B cell (primary cell): ENCODE measurements at regions of chr19 and their contacts with region 1.

Region 1: GRCh38 chr19:50414864-50415660 is 3.7 kb upstream of the SPIB start:
- DNase-seq: peak; percentile 91
- ATAC-seq: peak; percentile 21
- H3K4me3 ChIP-seq: peak overlapping the region in 4 of 5 experiments; percentile 44 to 60 (median 52)
- H3K4me3 Mint-ChIP-seq: peak overlapping the region; percentile 81
- H3K27ac ChIP-seq: peak overlapping the region; percentile 97 to 98
- H3K27ac Mint-ChIP-seq: peak overlapping the region; percentile 98
- H3K4me1 ChIP-seq: peaks cover 30 to 48% of the 10 kb centered on the region in 2 donors
- H3K4me1 Mint-ChIP-seq: peaks cover 37% of the 10 kb centered on the region
- H3K27me3 ChIP-seq: no peaks in the 10 kb centered on the region
- H3K27me3 Mint-ChIP-seq: no peaks in the 10 kb centered on the region
- CTCF ChIP-seq: peak; percentile 92

Region 2: DNA sequence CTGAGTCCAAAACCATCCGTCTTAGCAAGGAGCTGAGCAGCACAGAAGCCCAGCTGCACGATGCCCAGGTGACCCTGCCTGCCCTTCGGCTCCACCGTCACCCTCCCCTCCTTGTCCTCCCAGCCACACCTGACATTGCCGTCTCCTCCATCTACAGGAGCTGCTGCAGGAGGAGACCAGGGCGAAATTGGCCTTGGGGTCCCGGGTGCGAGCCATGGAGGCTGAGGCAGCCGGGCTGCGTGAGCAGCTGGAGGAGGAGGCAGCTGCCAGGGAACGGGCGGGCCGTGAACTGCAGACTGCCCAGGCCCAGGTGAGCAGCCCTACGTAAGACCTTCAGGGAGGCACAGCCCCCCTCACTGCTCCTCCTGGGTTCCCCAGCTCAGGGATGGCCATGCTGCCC is 135.0 kb before region 1 on chr19:
- CTCF ChIA-PET with region 1: no interaction called
- POLR2A ChIA-PET with region 1: no interaction called
- intact Hi-C with region 1: no loop called
- DNase-seq: no peak
- ATAC-seq: no peak
- H3K4me3 ChIP-seq: no peak overlapping the region
- H3K4me3 Mint-ChIP-seq: no peak overlapping the region
- H3K27ac ChIP-seq: no peak overlapping the region
- H3K27ac Mint-ChIP-seq: no peak overlapping the region
- H3K4me1 ChIP-seq: no peaks in the 10 kb centered on the region
- H3K4me1 Mint-ChIP-seq: no peaks in the 10 kb centered on the region
- H3K27me3 ChIP-seq: peaks cover 0 to 9% (median 0%) of the 10 kb centered on the region in 4 experiments
- H3K27me3 Mint-ChIP-seq: peaks cover 11% of the 10 kb centered on the region
- CTCF ChIP-seq: no peak

Region 3: GRCh38 chr19:50341091-50341564 is 73.9 kb before region 1 on chr19:
- CTCF ChIA-PET with region 1: interaction called, 4 read pairs
- POLR2A ChIA-PET with region 1: interaction called, 5 read pairs
- intact Hi-C with region 1: loop called (anchors 5 kb)
- DNase-seq: peak; percentile 81
- ATAC-seq: peak; percentile 56
- H3K4me3 ChIP-seq: peak overlapping the region in 4 of 5 experiments; percentile 61 to 91 (median 76)
- H3K4me3 Mint-ChIP-seq: peak overlapping the region; percentile 86
- H3K27ac ChIP-seq: peak overlapping the region; percentile 37 to 72
- H3K27ac Mint-ChIP-seq: peak overlapping the region; percentile 91
- H3K4me1 ChIP-seq: peaks cover 65 to 84% of the 10 kb centered on the region in 2 donors
- H3K4me1 Mint-ChIP-seq: peaks cover 77% of the 10 kb centered on the region
- H3K27me3 ChIP-seq: no peaks in the 10 kb centered on the region
- H3K27me3 Mint-ChIP-seq: no peaks in the 10 kb centered on the region
- CTCF ChIP-seq: no peak

Region 4: DNA sequence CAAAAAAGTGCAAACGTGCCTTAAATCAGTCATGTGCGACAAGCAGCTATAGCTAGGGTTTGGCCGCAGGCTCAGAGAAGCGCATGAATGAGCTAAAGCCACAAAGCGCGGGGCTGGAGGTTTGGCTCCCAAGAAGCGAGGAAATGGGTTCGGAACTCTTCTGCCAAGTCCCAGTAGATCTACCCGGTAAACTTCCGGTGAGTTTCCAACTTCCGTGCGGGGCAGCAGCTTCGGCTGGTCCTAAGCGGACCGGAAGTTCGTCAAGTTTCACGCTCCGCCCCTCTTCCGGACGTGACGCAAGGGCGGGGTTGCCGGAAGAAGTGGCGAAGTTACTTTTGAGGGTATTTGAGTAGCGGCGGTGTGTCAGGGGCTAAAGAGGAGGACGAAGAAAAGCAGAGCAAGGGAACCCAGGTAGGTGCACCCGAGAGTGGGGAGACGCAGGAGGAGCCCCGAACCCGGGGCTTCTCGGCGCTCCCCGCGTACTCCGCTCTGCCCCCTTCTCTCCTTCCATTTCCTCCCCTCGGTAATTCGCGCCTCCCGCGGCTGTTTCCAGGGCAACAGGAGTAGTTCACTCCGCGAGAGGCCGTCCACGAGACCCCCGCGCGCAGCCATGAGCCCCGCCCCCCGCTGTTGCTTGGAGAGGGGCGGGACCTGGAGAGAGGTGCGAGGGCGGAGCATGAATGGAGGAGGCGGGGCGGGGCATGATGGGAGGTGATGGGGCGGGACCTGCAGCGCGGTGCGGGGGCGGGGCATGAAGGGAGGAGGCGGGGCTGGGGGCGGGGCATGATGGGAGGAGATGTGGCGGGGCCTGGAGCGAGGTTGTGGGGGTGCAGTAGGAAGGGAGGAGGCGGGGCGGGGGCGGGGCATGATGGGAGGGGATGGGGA is 38.7 kb before region 1 on chr19 and contains the start of gene NR1H2:
- CTCF ChIA-PET with region 1: interaction called, 10 read pairs
- POLR2A ChIA-PET with region 1: interaction called, 16 read pairs
- intact Hi-C with region 1: loop called (anchors 2 kb)
- DNase-seq: peak; percentile 99
- ATAC-seq: peak; percentile 87
- H3K4me3 ChIP-seq: peak within 1 kb of the TSS; percentile 30 to 98 (median 91)
- H3K4me3 Mint-ChIP-seq: peak within 1 kb of the TSS; percentile 97
- H3K27ac ChIP-seq: peak within 1 kb of the TSS; percentile 99 to 100
- H3K27ac Mint-ChIP-seq: peak within 1 kb of the TSS; percentile 99
- H3K4me1 ChIP-seq: peaks cover 6 to 14% of the 10 kb centered on the region in 2 donors
- H3K4me1 Mint-ChIP-seq: peaks cover 19% of the 10 kb centered on the region
- H3K27me3 ChIP-seq: no peaks in the 10 kb centered on the region
- H3K27me3 Mint-ChIP-seq: no peaks in the 10 kb centered on the region
- CTCF ChIP-seq: no peak
- total RNA-seq, gene NR1H2: 116 and 118 TPM in 2 replicates

Region 5: GRCh38 chr19:50383852-50384684 is 31.0 kb before region 1 on chr19 and contains the start of gene POLD1:
- CTCF ChIA-PET with region 1: interaction called, 22 read pairs
- POLR2A ChIA-PET with region 1: interaction called, 15 read pairs
- intact Hi-C with region 1: loop called (anchors 1 kb)
- DNase-seq: peak; percentile 100
- ATAC-seq: peak; percentile 96
- H3K4me3 ChIP-seq: peak within 1 kb of the TSS; percentile 59 to 92 (median 67)
- H3K4me3 Mint-ChIP-seq: peak within 1 kb of the TSS; percentile 94
- H3K27ac ChIP-seq: peak within 1 kb of the TSS; percentile 64 to 73
- H3K27ac Mint-ChIP-seq: peak within 1 kb of the TSS; percentile 92
- H3K4me1 ChIP-seq: peaks cover 12 to 18% of the 10 kb centered on the region in 2 donors
- H3K4me1 Mint-ChIP-seq: peaks cover 31% of the 10 kb centered on the region
- H3K27me3 ChIP-seq: no peaks in the 10 kb centered on the region
- H3K27me3 Mint-ChIP-seq: no peaks in the 10 kb centered on the region
- CTCF ChIP-seq: no peak
- total RNA-seq, gene POLD1: 43.6 and 52.4 TPM in 2 replicates

Region 6: DNA sequence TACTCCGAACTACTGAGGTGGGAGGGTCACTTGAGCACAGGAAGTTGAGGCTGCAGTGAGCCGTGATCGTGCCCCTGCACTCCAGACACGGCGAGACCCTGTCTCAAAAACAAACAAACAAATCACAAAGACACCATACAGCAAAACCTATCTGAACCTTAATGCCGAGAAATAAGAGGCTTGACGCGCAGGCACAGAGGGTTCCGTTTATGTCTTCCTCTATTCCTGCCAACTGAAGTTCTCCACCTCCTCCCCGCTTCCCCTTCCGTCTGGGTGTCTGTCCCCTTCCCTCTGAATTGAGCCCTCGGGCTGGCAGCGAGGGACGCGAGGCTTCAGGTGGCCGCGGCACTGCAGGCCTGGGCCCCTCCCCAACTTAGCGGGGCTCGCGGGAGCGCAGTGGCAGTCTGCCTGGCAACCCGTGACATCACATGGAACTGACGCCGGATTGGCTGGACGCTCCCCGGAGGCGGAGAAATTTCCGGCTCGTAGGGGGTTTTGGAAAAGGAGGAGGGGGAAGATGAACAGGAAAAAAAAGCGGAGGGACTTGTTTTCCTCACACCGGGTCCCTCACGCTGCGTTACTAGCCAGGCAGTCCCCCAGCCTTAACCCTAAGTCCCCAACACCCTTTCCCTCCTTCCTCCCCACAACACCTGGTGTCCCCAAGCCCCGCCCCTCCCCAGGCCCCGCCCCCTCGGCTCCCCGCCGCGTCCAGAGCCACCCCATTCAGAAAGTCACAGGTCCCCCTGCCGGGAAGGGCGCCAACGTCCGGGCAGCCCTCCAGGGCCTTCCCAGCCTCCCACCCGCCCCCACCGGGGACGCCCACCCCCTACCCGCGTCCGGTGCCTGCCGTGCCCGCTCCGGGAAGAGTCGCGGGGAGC is 16.5 kb after region 1 on chr19:
- CTCF ChIA-PET with region 1: interaction called, 9 read pairs
- POLR2A ChIA-PET with region 1: interaction called, 96 read pairs
- intact Hi-C with region 1: loop called (anchors 1 kb)
- DNase-seq: peak; percentile 96
- ATAC-seq: peak; percentile 65
- H3K4me3 ChIP-seq: peak overlapping the region; percentile 35 to 66 (median 61)
- H3K4me3 Mint-ChIP-seq: peak overlapping the region; percentile 97
- H3K27ac ChIP-seq: peak overlapping the region; percentile 97 to 99
- H3K27ac Mint-ChIP-seq: peak overlapping the region; percentile 99
- H3K4me1 ChIP-seq: peaks cover 70 to 93% of the 10 kb centered on the region in 2 donors
- H3K4me1 Mint-ChIP-seq: peaks cover 84% of the 10 kb centered on the region
- H3K27me3 ChIP-seq: no peaks in the 10 kb centered on the region
- H3K27me3 Mint-ChIP-seq: no peaks in the 10 kb centered on the region
- CTCF ChIP-seq: no peak

Region 7: GRCh38 chr19:50476224-50476942 is 61.3 kb after region 1 on chr19 and contains the starts of genes EMC10 and GARIN5A:
- CTCF ChIA-PET with region 1: no interaction called
- POLR2A ChIA-PET with region 1: no interaction called
- intact Hi-C with region 1: loop called (anchors 1 kb)
- DNase-seq: peak; percentile 98
- ATAC-seq: peak; percentile 95
- H3K4me3 ChIP-seq: peak within 1 kb of the TSS; percentile 35 to 100 (median 98)
- H3K4me3 Mint-ChIP-seq: peak within 1 kb of the TSS; percentile 99
- H3K27ac ChIP-seq: peak within 1 kb of the TSS; percentile 82 to 90
- H3K27ac Mint-ChIP-seq: peak within 1 kb of the TSS; percentile 94
- H3K4me1 ChIP-seq: peaks cover 14 to 23% of the 10 kb centered on the region in 2 donors
- H3K4me1 Mint-ChIP-seq: peaks cover 29% of the 10 kb centered on the region
- H3K27me3 ChIP-seq: no peaks in the 10 kb centered on the region
- H3K27me3 Mint-ChIP-seq: no peaks in the 10 kb centered on the region
- CTCF ChIP-seq: no peak
- total RNA-seq, gene EMC10: 81.1 and 88.1 TPM in 2 replicates
- total RNA-seq, gene GARIN5A: 0.34 and 0.58 TPM in 2 replicates